ENCODE measurements at regions of chr19 and their contacts with region 1.

Region 1: GRCh38 chr19:7680606-7681339 is at the start of gene TRAPPC5:
- DNase-seq: peak; percentile 94
- ATAC-seq: peak; percentile 91
- H3K4me3 ChIP-seq: peak within 1 kb of the TSS; percentile 100
- H3K27ac ChIP-seq: peak within 1 kb of the TSS; percentile 92
- H3K4me1 ChIP-seq: peaks cover 6% of the 10 kb centered on the region
- H3K27me3 ChIP-seq: no peaks in the 10 kb centered on the region
- CTCF ChIP-seq: peak; percentile 91
- total RNA-seq, gene TRAPPC5: 83.9 TPM

Region 2: DNA sequence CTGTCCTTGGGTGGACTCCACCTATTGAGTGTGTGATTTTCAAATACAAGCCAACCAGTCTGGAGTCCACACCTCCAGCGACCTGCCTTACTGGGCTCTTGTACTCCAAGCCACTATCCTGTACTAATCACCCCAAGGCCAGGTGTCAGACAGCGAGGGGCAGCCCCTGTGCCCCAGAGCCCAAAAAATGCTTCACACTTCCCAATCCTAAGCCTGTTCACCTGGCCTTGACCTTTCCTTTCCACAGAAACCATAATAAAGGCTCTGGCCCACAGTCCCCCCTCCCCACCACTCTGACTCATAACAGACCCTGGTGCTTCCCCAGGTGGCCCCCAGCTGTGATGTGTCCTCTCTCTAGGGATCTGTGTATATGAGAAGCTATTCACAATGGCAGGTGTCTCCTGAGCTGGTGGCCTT is 62.7 kb after region 1 on chr19:
- intact Hi-C with region 1: no loop called
- DNase-seq: no peak
- ATAC-seq: no peak
- H3K4me3 ChIP-seq: no peak overlapping the region
- H3K27ac ChIP-seq: no peak overlapping the region
- H3K4me1 ChIP-seq: no peaks in the 10 kb centered on the region
- H3K27me3 ChIP-seq: no peaks in the 10 kb centered on the region
- CTCF ChIP-seq: no peak

Region 3: DNA sequence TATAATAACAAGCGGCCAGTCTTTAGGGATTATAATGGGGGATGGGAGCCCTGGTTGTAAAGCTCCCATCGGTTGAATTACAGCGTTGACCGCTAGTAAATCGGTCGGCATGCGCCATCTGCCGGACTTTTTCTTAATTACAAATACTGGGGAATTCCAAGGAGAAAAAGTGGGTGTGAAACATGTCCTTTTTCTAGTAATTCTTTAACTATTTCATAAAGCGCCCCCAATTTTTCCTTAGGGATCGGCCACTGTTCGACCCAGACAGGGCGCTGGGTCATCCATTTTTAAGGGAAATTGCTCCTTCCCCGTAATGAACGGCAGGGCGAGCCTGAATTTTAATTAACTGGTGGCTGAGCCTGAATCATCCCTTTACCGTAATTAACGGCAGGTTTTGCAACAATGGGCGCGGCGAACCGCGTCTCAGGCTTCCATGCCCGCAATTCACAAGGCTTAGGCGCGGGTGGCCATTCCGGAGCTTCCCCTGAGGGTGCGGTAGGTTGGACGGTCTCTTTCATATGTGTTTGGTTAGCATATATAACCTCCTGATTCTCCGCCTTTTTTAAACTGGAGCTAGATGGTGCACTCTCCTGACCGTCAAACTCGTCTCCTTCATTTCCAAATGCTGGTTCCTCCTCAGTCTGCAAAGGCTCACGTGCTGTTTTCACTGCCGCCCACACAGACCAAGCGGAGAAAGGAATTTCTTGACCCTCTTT is 119.0 kb after region 1 on chr19:
- intact Hi-C with region 1: loop called (anchors 10 kb)
- DNase-seq: peak; percentile 78
- ATAC-seq: peak; percentile 94
- H3K4me3 ChIP-seq: peak overlapping the region; percentile 4
- H3K27ac ChIP-seq: no peak overlapping the region
- H3K4me1 ChIP-seq: no peaks in the 10 kb centered on the region
- H3K27me3 ChIP-seq: no peaks in the 10 kb centered on the region
- CTCF ChIP-seq: peak; percentile 56

Measured in upper lobe of right lung (tissue), 1 donor.